ENCODE measurements at regions of chr1 and their contacts with region 1.

Region 1: DNA sequence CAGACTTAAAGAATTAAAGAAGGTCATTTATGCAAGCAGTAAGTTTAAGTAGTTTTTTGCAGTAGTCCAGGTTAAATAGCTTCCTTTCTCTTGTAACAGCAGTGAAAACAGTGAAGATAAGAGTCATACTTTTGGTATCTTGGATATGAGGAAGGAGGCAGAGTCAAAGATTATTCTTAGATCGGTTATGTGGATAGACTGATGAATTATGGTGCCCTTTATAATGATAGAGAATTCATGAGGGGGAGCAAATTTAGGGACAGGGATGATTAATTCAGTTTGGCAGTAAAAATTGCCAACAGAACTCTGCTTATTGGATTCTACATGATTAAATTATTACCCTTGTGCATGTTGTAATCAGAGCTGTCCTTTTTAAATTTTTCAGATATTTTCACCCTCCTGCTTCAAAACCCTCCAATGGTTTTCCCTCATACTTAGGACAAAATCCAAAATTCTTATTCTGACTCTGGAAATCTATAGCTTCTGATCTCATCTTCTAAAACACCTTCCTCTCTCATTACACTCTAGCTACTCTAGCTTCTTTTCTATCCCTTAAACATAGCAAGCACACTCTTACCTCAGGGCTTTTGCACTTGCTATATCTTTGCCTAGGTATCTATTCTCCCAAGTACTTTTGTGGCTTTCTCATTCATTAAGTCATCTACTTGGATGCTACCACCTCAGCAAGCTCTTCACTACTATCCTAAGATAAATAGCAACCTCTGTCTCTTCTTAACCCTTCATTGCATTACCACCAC is 79.8 kb downstream of the PKN2 start:
- DNase-seq: peak; percentile 66
- ATAC-seq: peak; percentile 95
- H3K4me3 ChIP-seq: no peak overlapping the region
- H3K27ac ChIP-seq: no peak overlapping the region
- H3K4me1 ChIP-seq: peaks cover 2% of the 10 kb centered on the region; the same call in 1 of the 2 replicates
- H3K27me3 ChIP-seq: no peaks in the 10 kb centered on the region
- CTCF ChIP-seq: no peak
- POLR2A ChIP-seq: no peak
- RAD21 ChIP-seq: no peak

Region 2: GRCh38 chr1:88581703-88582102 is 182.1 kb before region 1 on chr1:
- CTCF ChIA-PET with region 1: no interaction called
- POLR2A ChIA-PET with region 1: no interaction called
- dilution Hi-C with region 1: no loop called
- in situ Hi-C with region 1: no loop called
- intact Hi-C with region 1: no loop called
- DNase-seq: no peak
- ATAC-seq: no peak
- H3K4me3 ChIP-seq: no peak overlapping the region
- H3K27ac ChIP-seq: no peak overlapping the region
- H3K4me1 ChIP-seq: no peaks in the 10 kb centered on the region
- H3K27me3 ChIP-seq: no peaks in the 10 kb centered on the region
- CTCF ChIP-seq: no peak
- POLR2A ChIP-seq: no peak
- RAD21 ChIP-seq: no peak

Region 3: DNA sequence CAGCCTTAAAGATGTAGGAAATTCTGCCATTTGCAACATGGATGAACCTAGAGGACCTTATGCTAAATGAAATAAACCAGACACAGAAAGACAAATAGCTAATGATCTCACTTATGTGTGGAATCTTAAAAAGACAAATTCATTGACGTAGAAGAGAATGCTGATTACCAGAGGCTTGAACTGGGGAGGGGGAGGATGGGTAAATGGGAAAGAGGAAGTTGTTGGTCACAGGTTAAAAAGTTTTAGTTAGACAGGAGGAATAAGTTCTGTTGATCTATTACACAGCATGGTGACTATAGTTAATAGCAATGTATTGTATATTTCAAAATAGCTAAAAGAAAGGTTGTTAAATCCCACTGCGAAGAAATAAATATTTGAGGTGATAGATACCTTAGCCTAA is 16.9 kb before region 1 on chr1:
- CTCF ChIA-PET with region 1: no interaction called
- POLR2A ChIA-PET with region 1: no interaction called
- dilution Hi-C with region 1: no loop called
- in situ Hi-C with region 1: no loop called
- intact Hi-C with region 1: loop called (anchors 2 kb)
- DNase-seq: no peak
- ATAC-seq: no peak
- H3K4me3 ChIP-seq: no peak overlapping the region
- H3K27ac ChIP-seq: no peak overlapping the region
- H3K4me1 ChIP-seq: no peaks in the 10 kb centered on the region
- H3K27me3 ChIP-seq: no peaks in the 10 kb centered on the region
- CTCF ChIP-seq: no peak
- POLR2A ChIP-seq: no peak
- RAD21 ChIP-seq: no peak

Region 4: DNA sequence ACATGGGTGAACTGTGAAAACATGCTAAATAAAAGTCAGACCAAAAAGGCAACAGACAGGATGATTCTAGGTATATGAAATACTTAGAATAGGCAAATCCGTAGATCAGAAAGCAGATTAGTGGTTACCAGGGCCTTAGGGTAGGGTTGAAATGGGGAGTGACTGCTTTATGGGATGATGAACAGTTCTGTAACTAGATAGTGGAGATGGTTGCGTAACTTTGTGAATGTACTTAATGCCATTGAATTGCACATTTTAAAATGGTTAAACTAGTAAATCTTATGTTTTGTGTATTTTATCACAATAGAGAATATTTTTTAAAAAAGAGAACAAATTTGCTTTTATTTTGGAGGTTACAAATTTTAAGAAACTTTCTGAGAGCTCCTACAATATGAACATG is 1248.5 kb after region 1 on chr1:
- CTCF ChIA-PET with region 1: no interaction called
- POLR2A ChIA-PET with region 1: no interaction called
- dilution Hi-C with region 1: no loop called
- in situ Hi-C with region 1: no loop called
- intact Hi-C with region 1: loop called (anchors 5 kb)
- DNase-seq: no peak
- ATAC-seq: no peak
- H3K4me3 ChIP-seq: no peak overlapping the region
- H3K27ac ChIP-seq: no peak overlapping the region
- H3K4me1 ChIP-seq: peaks cover 3% of the 10 kb centered on the region
- H3K27me3 ChIP-seq: no peaks in the 10 kb centered on the region
- CTCF ChIP-seq: no peak
- POLR2A ChIP-seq: no peak
- RAD21 ChIP-seq: no peak

Measured in IMR-90 (cell line).